Activated T-helper 2 cell treated with anti-CD3 and anti-CD28 coated beads, Interferon-gamma antibody, Interleukin-2, Interleukin-4, amounts not matched to agents 10 μg/mL and 5 μg/mL and 100 μg/mL, durations not matched to agents 14 hours and 24 hours and 36 hours (primary cell): ENCODE measurements at regions of chr20 and their contacts with region 1.

Region 1: GRCh38 chr20:50338479-50339391 is 148.1 kb downstream of the CEBPB start:
- DNase-seq: peak; percentile 71
- H3K4me3 Mint-ChIP-seq: peak overlapping the region; percentile 75
- H3K27ac Mint-ChIP-seq: peak overlapping the region; percentile 92
- H3K4me1 Mint-ChIP-seq: peaks cover 61% of the 10 kb centered on the region
- H3K27me3 Mint-ChIP-seq: no peaks in the 10 kb centered on the region

Region 2: DNA sequence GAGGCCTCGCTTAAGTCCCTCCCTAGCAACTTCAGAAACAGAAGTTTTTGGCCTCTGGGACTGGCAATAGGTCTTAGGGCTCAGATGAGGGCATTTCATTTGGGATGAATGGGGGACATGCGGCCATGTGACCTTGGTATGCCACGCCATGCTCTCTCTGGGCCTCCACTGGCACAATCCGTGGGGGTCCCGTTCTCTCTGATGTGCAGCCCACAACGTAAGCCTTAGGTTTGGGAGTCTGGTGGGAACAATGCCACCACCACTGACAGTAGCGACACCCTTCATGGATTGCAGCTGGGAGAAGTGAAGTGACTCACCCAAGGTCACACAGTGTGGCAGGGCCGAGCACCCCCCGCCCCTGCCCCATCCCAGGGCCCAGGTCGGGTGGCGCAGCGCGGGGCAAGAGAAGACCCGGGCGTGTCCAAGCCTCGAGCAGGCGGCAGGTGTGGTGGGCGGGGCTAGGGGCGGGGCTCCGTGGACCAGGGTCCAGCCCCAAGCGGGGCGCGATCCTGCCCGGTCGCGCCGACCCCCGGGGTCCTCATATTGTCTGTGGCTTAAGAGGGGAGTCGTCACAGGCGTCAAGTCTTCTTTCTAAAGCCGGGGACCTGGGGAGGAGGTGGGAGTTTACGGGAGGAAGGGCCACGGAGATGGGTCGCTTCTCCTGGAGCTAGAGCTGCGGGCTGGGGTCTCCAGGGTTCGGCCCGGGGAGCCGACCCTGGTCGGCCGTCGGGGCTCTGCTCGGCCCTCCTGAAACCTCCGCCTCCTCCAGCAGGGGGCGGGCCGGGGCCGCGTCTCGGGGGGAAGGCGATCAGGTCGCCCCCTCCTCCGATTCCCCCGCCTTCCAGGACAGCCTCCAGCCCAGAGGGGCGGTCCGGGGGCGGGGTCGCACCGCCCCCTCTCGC is 148.8 kb before region 1 on chr20:
- intact Hi-C with region 1: loop called (anchors 2 kb)
- DNase-seq: peak; percentile 78
- H3K4me3 Mint-ChIP-seq: peak overlapping the region; percentile 39
- H3K27ac Mint-ChIP-seq: no peak overlapping the region
- H3K4me1 Mint-ChIP-seq: peaks cover 25% of the 10 kb centered on the region
- H3K27me3 Mint-ChIP-seq: peaks cover 10% of the 10 kb centered on the region

Region 3: GRCh38 chr20:50286609-50287008 is 52.1 kb before region 1 on chr20:
- intact Hi-C with region 1: loop called (anchors 2 kb)
- DNase-seq: no peak
- H3K4me3 Mint-ChIP-seq: no peak overlapping the region
- H3K27ac Mint-ChIP-seq: no peak overlapping the region
- H3K4me1 Mint-ChIP-seq: peaks cover 31% of the 10 kb centered on the region
- H3K27me3 Mint-ChIP-seq: no peaks in the 10 kb centered on the region

Region 4: DNA sequence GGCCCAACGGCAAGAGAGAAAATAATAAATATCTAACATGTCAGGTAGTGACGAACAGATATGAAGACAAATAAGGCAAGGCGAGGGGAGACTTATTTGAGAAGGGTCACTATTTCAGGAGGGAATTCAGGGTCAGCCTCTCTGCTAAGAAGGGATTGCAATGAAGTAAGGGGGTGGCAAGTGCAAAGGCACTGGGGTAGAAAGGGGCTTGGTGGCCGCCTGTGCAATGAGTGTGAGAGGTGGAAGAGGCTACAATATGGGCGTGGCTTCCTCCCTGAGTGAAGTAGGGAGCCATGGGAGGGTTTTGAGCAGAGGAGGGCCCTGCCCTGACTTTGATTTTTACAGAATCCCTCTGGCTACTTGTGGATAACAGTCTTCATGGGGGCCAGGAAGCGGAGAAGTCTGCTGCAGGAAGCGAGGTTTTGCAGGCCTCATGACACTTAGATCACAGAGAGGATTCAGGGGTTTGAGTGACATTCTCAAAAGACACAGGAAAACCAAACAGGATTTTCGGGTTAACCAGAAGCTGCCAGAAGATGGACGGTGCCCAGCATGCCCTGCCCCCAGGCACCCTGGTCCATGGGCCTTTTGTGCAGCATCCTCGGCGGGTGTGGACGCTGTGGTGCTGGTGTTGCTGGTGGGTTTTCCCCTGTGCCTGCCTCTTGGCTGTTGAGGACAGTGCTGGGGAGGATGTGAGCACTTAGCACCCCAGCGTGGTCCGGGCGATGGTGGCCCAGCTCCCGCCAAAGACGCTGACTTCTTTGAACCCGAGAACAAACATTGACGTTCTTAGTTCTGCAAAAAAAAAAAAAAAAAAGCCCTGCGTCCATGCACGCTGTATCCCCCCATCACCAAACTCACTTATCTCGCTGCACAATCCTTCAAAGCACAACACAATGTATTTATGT is 47.3 kb after region 1 on chr20:
- intact Hi-C with region 1: loop called (anchors 1 kb)
- DNase-seq: peak; percentile 65
- H3K4me3 Mint-ChIP-seq: peak overlapping the region; percentile 52
- H3K27ac Mint-ChIP-seq: peak overlapping the region; percentile 72
- H3K4me1 Mint-ChIP-seq: peaks cover 66% of the 10 kb centered on the region
- H3K27me3 Mint-ChIP-seq: peaks cover 5% of the 10 kb centered on the region

Region 5: GRCh38 chr20:50460460-50461267 is 121.9 kb after region 1 on chr20:
- intact Hi-C with region 1: loop called (anchors 5 kb)
- DNase-seq: peak; percentile 72
- H3K4me3 Mint-ChIP-seq: no peak overlapping the region
- H3K27ac Mint-ChIP-seq: no peak overlapping the region
- H3K4me1 Mint-ChIP-seq: peaks cover 7% of the 10 kb centered on the region
- H3K27me3 Mint-ChIP-seq: no peaks in the 10 kb centered on the region